ENCODE measurements at regions of chr4 and their contacts with region 1.

Region 1: GRCh38 chr4:129344058-129344457 is 248.1 kb downstream of the C4orf33 start:
- DNase-seq: no peak
- H3K4me3 ChIP-seq: no peak overlapping the region
- H3K27ac ChIP-seq: no peak overlapping the region
- H3K27me3 ChIP-seq: no peaks in the 10 kb centered on the region
- CTCF ChIP-seq: peak; percentile 72

Region 2: GRCh38 chr4:129362674-129363274 is 18.7 kb after region 1 on chr4:
- CTCF ChIA-PET with region 1: interaction called, 19 read pairs
- POLR2A ChIA-PET with region 1: no interaction called
- DNase-seq: peak; percentile 37
- H3K4me3 ChIP-seq: no peak overlapping the region
- H3K27ac ChIP-seq: no peak overlapping the region
- H3K27me3 ChIP-seq: no peaks in the 10 kb centered on the region
- CTCF ChIP-seq: peak; percentile 83